Lower lobe of right lung (tissue), 2 donors: ENCODE measurements at regions of chr17 and their contacts with region 1.

Region 1: DNA sequence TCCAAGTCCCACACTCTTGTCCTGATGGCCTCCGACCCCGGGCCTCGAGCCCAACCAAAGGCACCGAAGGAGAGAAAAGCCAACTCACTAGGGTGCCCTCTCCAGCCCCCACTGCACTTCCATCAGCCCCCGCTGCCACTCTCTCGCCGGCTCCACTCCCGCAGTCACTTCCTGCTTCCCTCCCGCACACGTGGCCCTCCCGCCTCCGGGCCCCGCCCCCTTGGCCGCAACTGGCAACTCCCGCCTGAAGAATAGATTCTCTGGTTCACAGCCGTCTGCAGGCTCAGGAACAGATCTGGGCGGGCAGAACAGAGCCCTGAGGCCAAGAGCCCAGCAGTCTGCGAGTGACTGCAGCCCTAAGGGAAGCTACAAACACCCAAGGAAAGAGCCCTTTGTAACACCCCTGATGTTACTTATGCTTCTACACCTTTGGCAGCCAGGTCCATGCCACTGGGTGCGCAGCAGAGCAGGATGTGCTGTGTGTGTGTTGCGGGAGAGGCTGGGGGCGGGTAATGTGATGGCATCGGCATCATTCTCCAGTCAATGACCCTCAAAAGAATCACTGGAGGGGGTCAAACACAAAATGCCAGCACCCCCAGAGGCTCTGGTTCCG is at the start of gene SLC39A11:
- DNase-seq: peak; percentile 94
- ATAC-seq: peak; percentile 97 to 99
- H3K4me3 ChIP-seq: peak within 1 kb of the TSS; percentile 81
- H3K27ac ChIP-seq: peak within 1 kb of the TSS; percentile 79
- H3K4me1 ChIP-seq: peaks cover 32% of the 10 kb centered on the region
- H3K27me3 ChIP-seq: no peaks in the 10 kb centered on the region
- CTCF ChIP-seq: no peak
- total RNA-seq, gene SLC39A11: 39.7 TPM

Region 2: DNA sequence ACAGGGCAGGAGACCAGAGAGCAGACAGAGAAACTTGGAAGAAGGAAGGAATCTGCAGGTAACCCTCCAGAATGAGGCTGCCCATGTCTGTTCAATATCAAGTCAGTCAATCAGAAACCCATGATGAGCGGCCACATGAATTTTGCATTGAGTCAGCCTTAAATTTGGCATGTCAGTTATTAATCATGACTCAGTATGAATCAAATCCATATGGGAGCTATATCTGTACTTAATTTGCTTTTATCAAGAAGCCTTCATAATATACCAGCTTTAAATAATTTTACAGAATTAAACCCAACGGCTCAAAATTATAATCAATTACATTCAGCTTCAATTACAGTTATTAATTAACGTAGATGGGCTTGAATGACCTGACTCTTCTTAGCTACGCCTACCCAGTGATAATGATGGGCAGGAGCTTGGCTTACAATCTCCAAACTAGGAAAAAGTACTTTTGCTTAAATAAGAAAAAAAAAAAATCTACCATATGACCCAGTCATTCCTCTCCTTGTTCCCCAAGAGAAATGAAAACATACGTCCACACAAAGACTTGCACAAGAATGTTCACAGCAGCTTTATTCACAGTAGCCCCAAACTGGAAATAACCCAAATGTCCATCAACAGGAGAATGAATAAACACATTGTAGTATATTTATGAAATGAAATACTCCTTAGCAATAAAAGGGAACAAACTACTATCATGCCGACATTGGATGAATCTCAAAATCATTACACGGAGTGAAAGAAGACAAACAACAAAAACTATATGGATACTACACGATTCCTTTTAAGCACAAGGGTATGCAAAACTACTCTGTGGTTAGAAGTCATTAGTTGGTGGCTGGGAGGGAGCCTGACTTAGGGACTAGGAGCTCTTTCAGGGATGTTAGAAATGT is 48.7 kb before region 1 on chr17:
- intact Hi-C with region 1: loop called (anchors 5 kb)
- DNase-seq: no peak
- ATAC-seq: no peak
- H3K4me3 ChIP-seq: no peak overlapping the region
- H3K27ac ChIP-seq: no peak overlapping the region
- H3K4me1 ChIP-seq: peaks cover 16% of the 10 kb centered on the region
- H3K27me3 ChIP-seq: no peaks in the 10 kb centered on the region
- CTCF ChIP-seq: no peak

Region 3: GRCh38 chr17:73231841-73232586 is 139.4 kb after region 1 on chr17:
- intact Hi-C with region 1: no loop called
- DNase-seq: peak; percentile 98
- ATAC-seq: peak; percentile 98 to 99
- H3K4me3 ChIP-seq: peak overlapping the region; percentile 97
- H3K27ac ChIP-seq: peak overlapping the region; percentile 89
- H3K4me1 ChIP-seq: peaks cover 48% of the 10 kb centered on the region
- H3K27me3 ChIP-seq: no peaks in the 10 kb centered on the region
- CTCF ChIP-seq: peak; percentile 51